ENCODE measurements at regions of chr4 and their contacts with region 1.

Region 1: GRCh38 chr4:82900331-82901128 is at the start of gene THAP9:
- DNase-seq: peak; percentile 99
- H3K4me3 ChIP-seq: peak within 1 kb of the TSS; percentile 86
- H3K27ac ChIP-seq: peak within 1 kb of the TSS; percentile 99
- H3K27me3 ChIP-seq: no peaks in the 10 kb centered on the region
- CTCF ChIP-seq: no peak
- polyA plus RNA-seq, gene THAP9: 2.2 and 3.2 TPM in 2 replicates

Region 2: DNA sequence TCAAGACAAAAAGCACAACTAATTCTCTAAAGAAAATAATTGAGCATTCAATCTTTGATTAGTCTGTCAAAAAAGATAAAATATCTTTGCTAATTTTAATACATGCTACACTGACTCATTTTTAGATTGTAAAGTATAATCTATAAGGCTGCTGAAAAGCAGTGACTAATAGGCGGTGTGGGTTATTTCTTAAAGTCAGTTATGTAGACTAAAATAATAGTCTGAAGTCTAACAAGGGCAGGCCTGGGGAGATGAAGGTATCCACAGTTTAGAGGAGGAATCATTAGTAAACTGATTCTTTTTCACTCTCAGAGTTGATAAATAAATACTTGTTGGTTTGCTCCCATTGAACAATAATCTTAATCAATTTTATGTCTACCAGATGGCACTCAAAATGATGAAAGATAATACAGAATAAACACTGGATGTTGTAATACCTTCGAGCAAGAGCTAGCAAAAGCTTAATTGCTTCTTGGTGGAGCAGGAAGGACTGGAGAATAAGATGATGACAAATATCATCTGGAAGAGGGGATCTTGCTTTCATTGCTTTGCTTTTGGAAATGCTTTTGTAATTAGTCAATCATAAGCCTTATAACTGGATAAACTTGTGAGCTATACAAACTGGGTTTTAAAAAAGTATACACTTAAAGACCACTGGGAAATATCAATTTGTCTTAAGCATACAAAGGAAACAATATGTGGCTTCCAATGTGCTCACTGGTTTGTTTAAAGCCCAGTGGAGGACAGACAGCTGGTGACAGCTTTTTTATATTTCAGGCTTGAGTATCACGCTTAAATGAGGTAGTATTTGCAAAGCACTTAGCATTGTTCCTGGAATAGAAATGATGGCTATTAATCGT is 400.2 kb before region 1 on chr4:
- CTCF ChIA-PET with region 1: no interaction called
- POLR2A ChIA-PET with region 1: no interaction called
- DNase-seq: no peak
- H3K4me3 ChIP-seq: no peak overlapping the region
- H3K27ac ChIP-seq: no peak overlapping the region
- H3K27me3 ChIP-seq: peaks cover 2% of the 10 kb centered on the region
- CTCF ChIP-seq: no peak

Region 3: GRCh38 chr4:82989575-82990429 is 89.3 kb after region 1 on chr4:
- CTCF ChIA-PET with region 1: no interaction called
- POLR2A ChIA-PET with region 1: interaction called, 14 read pairs
- DNase-seq: no peak
- H3K4me3 ChIP-seq: no peak overlapping the region; the same call in 1 of the 2 replicates
- H3K27ac ChIP-seq: peak overlapping the region; percentile 31
- H3K27me3 ChIP-seq: no peaks in the 10 kb centered on the region
- CTCF ChIP-seq: no peak